Heart left ventricle (tissue), 16 donors: ENCODE measurements at regions of chr19 and their contacts with region 1.

Region 1: GRCh38 chr19:10835754-10836477 is at the start of gene TMED1:
- DNase-seq: peak; percentile 98 to 100 (median 99)
- ATAC-seq: peak; percentile 92 to 95 (median 94)
- H3K4me3 ChIP-seq: peak within 1 kb of the TSS; percentile 37 to 96 (median 74)
- H3K27ac ChIP-seq: peak within 1 kb of the TSS; percentile 94 to 100 (median 98)
- H3K4me1 ChIP-seq: peaks cover 0 to 16% (median 9%) of the 10 kb centered on the region in 12 donors
- H3K27me3 ChIP-seq: no peaks in the 10 kb centered on the region
- CTCF ChIP-seq: peak in 11 of 12 donors; percentile 12 to 58 (median 31)
- POLR2A ChIP-seq: peak in 1 of 2 donors; percentile 50
- total RNA-seq, gene TMED1: 27.0 to 56.5 (median 35.0) TPM

Region 2: GRCh38 chr19:10780368-10780767 is 55.5 kb before region 1 on chr19:
- intact Hi-C with region 1: no loop called
- DNase-seq: peak in 4 of 5 donors; percentile 63 to 76 (median 73)
- ATAC-seq: peak; percentile 30 to 83 (median 78)
- H3K4me3 ChIP-seq: no peak overlapping the region
- H3K27ac ChIP-seq: peak overlapping the region in 11 of 12 donors; percentile 59 to 96 (median 70)
- H3K4me1 ChIP-seq: peaks cover 0 to 85% (median 17%) of the 10 kb centered on the region in 12 donors
- H3K27me3 ChIP-seq: no peaks in the 10 kb centered on the region
- CTCF ChIP-seq: no peak
- POLR2A ChIP-seq: peak in 1 of 2 donors; percentile 31

Region 3: GRCh38 chr19:10870955-10871603 is 35.2 kb after region 1 on chr19 and contains the start of gene CARM1:
- intact Hi-C with region 1: loop called in 3 of 10 experiments (anchors 1 to 2 kb)
- DNase-seq: peak; percentile 99 to 100 (median 99)
- ATAC-seq: peak; percentile 95 to 97 (median 96)
- H3K4me3 ChIP-seq: peak within 1 kb of the TSS; percentile 53 to 96 (median 76)
- H3K27ac ChIP-seq: peak within 1 kb of the TSS in 11 of 12 donors; percentile 70 to 87 (median 81)
- H3K4me1 ChIP-seq: peaks cover 0 to 52% (median 18%) of the 10 kb centered on the region in 12 donors
- H3K27me3 ChIP-seq: no peaks in the 10 kb centered on the region
- CTCF ChIP-seq: peak; percentile 35 to 86 (median 65)
- POLR2A ChIP-seq: peak in 1 of 2 donors; percentile 39
- total RNA-seq, gene CARM1: 22.4 to 39.5 (median 29.3) TPM

Region 4: DNA sequence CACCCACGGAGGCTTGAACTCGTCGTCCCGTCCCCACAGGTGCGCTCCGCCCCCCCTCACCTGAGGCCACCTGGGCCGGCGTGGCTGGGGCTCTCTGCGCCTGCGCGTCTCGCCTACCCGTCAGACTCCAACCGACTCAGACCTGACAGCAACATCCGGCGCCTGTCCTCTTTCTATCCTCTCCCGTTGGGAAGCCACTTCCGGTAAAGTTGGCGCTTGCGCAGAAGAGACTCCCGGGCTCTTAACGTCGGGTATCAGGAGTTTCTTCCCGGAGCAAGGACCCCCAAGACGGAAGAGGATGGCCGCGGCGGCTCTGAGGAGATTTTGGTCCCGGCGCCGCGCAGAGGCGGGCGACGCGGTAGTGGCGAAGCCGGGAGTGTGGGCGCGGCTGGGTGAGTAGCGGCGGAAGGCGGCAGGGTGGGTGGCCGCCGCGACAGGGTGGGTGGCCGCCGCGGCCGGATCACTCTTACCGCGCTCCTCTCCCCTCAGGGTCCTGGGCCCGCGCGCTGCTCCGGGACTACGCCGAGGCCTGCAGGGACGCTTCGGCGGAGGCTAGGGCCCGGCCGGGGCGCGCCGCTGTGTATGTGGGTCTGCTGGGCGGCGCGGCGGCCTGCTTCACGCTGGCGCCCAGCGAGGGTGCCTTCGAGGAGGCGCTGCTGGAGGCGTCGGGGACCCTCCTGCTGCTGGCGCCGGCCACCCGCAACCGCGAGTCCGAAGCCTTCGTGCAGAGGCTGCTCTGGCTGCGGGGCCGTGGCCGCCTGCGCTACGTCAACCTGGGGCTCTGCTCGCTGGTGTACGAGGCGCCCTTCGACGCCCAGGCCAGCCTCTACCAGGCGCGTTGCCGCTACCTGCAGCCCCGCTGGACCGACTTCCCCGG is 92.8 kb after region 1 on chr19 and contains the starts of genes TIMM29 and YIPF2:
- intact Hi-C with region 1: no loop called
- DNase-seq: peak; percentile 96 to 99 (median 97)
- ATAC-seq: peak; percentile 94 to 98 (median 96)
- H3K4me3 ChIP-seq: peak within 1 kb of the TSS; percentile 72 to 100 (median 96)
- H3K27ac ChIP-seq: peak within 1 kb of the TSS; percentile 59 to 92 (median 84)
- H3K4me1 ChIP-seq: peaks cover 3 to 32% (median 18%) of the 10 kb centered on the region in 12 donors
- H3K27me3 ChIP-seq: no peaks in the 10 kb centered on the region
- CTCF ChIP-seq: peak in 2 of 12 donors; percentile 8 to 16
- POLR2A ChIP-seq: peak in 1 of 2 donors; percentile 72
- total RNA-seq, gene TIMM29: 10.0 to 29.3 (median 14.5) TPM
- total RNA-seq, gene YIPF2: 11.5 to 27.1 (median 17.3) TPM